ENCODE measurements at regions of chr13 and their contacts with region 1.

Region 1: DNA sequence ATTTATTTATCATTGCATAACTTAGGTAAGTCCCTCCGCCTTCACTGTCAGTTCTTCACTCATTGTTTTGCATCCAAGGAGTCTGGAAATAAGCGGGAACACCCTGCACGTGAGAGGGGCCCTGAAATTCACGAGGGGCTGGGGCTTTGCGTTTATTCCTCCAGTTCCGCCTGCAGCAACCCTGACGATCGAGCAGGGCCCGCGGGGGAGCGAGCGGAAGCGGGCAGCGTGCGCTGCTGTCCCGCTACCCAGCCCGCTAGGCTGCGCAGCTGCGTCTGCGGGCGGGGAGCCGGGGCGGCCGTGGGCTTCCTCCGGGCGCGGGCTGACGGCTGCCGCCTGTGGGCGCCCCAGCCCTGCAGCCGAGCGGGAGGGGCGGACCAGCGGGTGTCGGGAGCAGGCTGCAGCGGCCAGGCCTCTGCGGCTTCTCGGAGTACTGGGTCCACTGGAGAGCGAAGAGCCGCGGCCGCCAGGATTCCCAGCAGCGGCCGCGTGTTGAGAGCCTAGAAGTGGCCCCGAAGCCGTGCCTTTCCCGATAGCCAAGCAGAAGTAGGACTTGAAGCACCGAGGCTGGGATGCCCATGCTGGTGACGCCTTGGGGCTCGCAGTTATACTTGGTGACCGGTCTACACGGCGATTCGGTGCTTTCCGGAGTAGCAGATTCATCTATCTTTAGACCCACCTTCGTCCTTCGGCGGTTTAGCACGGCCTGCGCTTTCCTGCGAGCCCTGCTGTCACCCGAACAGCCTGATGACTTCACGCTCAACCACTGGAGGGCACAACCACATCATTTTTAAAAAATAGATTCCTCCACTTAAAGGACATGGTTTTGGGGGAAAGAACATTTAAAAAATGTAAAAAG is 32.9 kb upstream of the SACS start:
- DNase-seq: peak; percentile 77
- H3K4me3 ChIP-seq: peak overlapping the region; percentile 5 to 57 (median 40)
- H3K27ac ChIP-seq: no peak overlapping the region
- H3K4me1 ChIP-seq: peaks cover 7% of the 10 kb centered on the region
- H3K27me3 ChIP-seq: peaks cover 6 to 13% of the 10 kb centered on the region in 2 experiments
- CTCF ChIP-seq: peak; percentile 46 to 48
- POLR2A ChIP-seq: no peak

Region 2: DNA sequence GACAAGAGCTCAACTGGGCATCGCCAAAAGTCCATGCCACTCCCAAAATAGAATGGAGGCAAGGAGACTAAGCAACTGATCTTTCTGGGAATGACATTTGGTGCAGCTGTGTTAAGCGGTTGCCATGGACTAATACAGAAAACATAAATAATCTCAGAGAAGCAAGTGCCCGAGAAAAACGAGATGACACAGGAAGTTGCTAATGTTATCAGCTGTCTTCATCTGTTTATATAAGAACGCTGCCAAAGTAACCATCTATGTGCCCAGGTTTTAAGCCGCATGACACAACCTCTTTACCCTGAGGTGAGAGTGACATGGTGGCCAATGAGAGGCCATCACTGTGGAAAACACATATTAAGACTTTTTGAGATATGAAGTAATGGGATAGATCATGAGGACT is 22.1 kb after region 1 on chr13:
- CTCF ChIA-PET with region 1: no interaction called
- POLR2A ChIA-PET with region 1: no interaction called
- dilution Hi-C with region 1: no loop called
- intact Hi-C with region 1: no loop called
- DNase-seq: peak; percentile 16
- H3K4me3 ChIP-seq: no peak overlapping the region
- H3K27ac ChIP-seq: no peak overlapping the region
- H3K4me1 ChIP-seq: no peaks in the 10 kb centered on the region
- H3K27me3 ChIP-seq: peaks cover 0 to 6% of the 10 kb centered on the region in 2 experiments
- CTCF ChIP-seq: no peak
- POLR2A ChIP-seq: no peak

Region 3: DNA sequence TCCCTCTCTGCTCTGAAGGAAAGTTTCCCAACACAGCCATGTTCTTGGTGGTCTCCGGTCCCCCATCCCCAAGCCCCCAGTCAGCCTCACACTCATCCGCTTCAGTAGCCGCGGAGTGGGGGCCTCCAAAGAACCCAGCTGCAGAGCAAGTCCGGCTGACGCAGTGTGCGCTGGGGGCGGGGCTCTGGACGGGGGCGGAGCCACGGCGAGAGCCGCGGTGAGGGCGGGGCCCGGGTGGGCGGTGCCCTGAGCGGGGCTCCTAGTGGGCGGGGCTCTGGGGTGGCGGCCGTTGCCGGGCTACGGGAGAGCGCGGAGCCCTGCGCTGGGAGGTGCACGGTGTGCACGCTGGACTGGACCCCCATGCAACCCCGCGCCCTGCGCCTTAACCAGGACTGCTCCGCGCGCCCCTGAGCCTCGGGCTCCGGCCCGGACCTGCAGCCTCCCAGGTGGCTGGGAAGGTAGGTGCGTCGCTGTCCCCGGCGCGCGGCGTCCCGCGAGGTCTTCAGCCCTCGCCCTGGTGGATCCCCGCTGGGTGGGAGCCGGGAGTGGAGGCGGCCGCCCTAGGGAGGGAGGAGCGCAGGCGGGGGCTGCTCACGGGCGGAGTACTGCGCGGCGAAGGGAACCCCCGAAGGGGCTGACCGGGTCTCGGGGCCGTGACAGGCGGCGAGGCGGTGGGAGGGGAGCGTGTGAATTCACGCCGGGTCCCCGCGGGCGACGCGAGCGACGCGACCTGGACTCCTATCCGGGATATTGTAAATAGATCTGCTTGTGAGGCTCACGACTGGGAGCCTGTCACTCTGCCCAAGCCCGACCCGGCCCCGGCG is 112.9 kb after region 1 on chr13:
- CTCF ChIA-PET with region 1: interaction called, 3 read pairs
- POLR2A ChIA-PET with region 1: no interaction called
- dilution Hi-C with region 1: no loop called
- intact Hi-C with region 1: loop called (anchors 1 kb)
- DNase-seq: peak; percentile 81
- H3K4me3 ChIP-seq: peak overlapping the region; percentile 16 to 64 (median 53)
- H3K27ac ChIP-seq: no peak overlapping the region
- H3K4me1 ChIP-seq: peaks cover 13% of the 10 kb centered on the region
- H3K27me3 ChIP-seq: peaks cover 27 to 41% of the 10 kb centered on the region in 2 experiments
- CTCF ChIP-seq: no peak
- POLR2A ChIP-seq: no peak

Region 4: GRCh38 chr13:23656637-23657371 is 190.4 kb after region 1 on chr13:
- CTCF ChIA-PET with region 1: no interaction called
- POLR2A ChIA-PET with region 1: no interaction called
- dilution Hi-C with region 1: no loop called
- intact Hi-C with region 1: no loop called
- DNase-seq: peak; percentile 48
- H3K4me3 ChIP-seq: no peak overlapping the region
- H3K27ac ChIP-seq: no peak overlapping the region
- H3K4me1 ChIP-seq: no peaks in the 10 kb centered on the region
- H3K27me3 ChIP-seq: peaks cover 2 to 8% of the 10 kb centered on the region in 2 experiments
- CTCF ChIP-seq: no peak
- POLR2A ChIP-seq: no peak

Region 5: DNA sequence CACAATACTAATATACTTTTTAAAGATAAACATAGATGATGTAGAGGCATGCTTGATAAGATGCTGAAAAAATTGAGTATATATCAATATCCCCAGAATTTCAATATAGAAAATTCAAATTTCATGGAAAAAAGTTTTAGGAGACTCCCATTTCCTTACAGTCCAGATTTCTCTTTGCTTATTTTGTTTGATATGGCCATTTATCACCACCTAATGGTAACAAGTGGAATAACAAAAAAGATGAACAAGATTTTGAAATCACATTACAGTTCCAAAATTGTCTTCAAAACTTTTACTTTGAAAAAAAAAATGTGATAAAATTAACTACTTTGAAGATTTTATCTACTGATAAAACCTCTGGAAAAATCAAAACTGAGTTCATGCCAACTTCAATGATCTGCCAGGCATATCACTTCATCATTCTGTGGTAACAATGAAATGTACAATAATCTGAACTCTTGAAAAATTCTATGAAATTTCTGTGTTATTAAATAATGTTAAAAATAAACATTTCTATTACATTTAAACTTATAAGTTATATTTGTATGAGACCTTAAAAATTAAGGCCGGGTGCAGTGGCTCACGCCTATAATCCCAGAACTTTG is 405.3 kb after region 1 on chr13:
- CTCF ChIA-PET with region 1: interaction called, 8 read pairs
- POLR2A ChIA-PET with region 1: no interaction called
- dilution Hi-C with region 1: no loop called
- intact Hi-C with region 1: loop called (anchors 1 kb)
- DNase-seq: peak; percentile 27
- H3K4me3 ChIP-seq: no peak overlapping the region
- H3K27ac ChIP-seq: no peak overlapping the region
- H3K4me1 ChIP-seq: peaks cover 14% of the 10 kb centered on the region
- H3K27me3 ChIP-seq: no peaks in the 10 kb centered on the region
- CTCF ChIP-seq: peak in 1 of 2 donors; percentile 41
- POLR2A ChIP-seq: no peak

Region 6: GRCh38 chr13:23899555-23899954 is 433.2 kb after region 1 on chr13:
- CTCF ChIA-PET with region 1: interaction called, 10 read pairs
- POLR2A ChIA-PET with region 1: no interaction called
- dilution Hi-C with region 1: no loop called
- intact Hi-C with region 1: loop called (anchors 1 kb)
- DNase-seq: peak; percentile 50
- H3K4me3 ChIP-seq: no peak overlapping the region
- H3K27ac ChIP-seq: no peak overlapping the region
- H3K4me1 ChIP-seq: peaks cover 20% of the 10 kb centered on the region
- H3K27me3 ChIP-seq: no peaks in the 10 kb centered on the region
- CTCF ChIP-seq: peak; percentile 23 to 46
- POLR2A ChIP-seq: no peak

Region 7: GRCh38 chr13:24220086-24220703 is 753.8 kb after region 1 on chr13:
- CTCF ChIA-PET with region 1: no interaction called
- POLR2A ChIA-PET with region 1: no interaction called
- dilution Hi-C with region 1: no loop called
- intact Hi-C with region 1: loop called (anchors 10 kb)
- DNase-seq: peak; percentile 77
- H3K4me3 ChIP-seq: no peak overlapping the region
- H3K27ac ChIP-seq: no peak overlapping the region
- H3K4me1 ChIP-seq: peaks cover 10% of the 10 kb centered on the region
- H3K27me3 ChIP-seq: no peaks in the 10 kb centered on the region
- CTCF ChIP-seq: peak; percentile 60 to 62
- POLR2A ChIP-seq: no peak